MCF 10A (cell line): ENCODE measurements at regions of chr3 and their contacts with region 1.

Region 1: GRCh38 chr3:192851821-192852424 is 65.7 kb downstream of the MB21D2 start:
- DNase-seq: peak; percentile 98
- H3K4me3 Mint-ChIP-seq: peak overlapping the region; percentile 19
- H3K27ac Mint-ChIP-seq: no peak overlapping the region
- H3K4me1 Mint-ChIP-seq: peaks cover 23% of the 10 kb centered on the region
- H3K27me3 Mint-ChIP-seq: peaks cover 19% of the 10 kb centered on the region
- CTCF ChIP-seq: no peak

Region 2: GRCh38 chr3:192841428-192841827 is 10.5 kb before region 1 on chr3:
- CTCF ChIA-PET with region 1: no interaction called
- POLR2A ChIA-PET with region 1: no interaction called
- intact Hi-C with region 1: no loop called
- DNase-seq: no peak
- H3K4me3 Mint-ChIP-seq: no peak overlapping the region
- H3K27ac Mint-ChIP-seq: no peak overlapping the region
- H3K4me1 Mint-ChIP-seq: peaks cover 4% of the 10 kb centered on the region
- H3K27me3 Mint-ChIP-seq: no peaks in the 10 kb centered on the region
- CTCF ChIP-seq: no peak

Region 3: GRCh38 chr3:192879336-192880106 is 27.6 kb after region 1 on chr3:
- CTCF ChIA-PET with region 1: interaction called, 3 read pairs
- POLR2A ChIA-PET with region 1: interaction called, 8 read pairs
- intact Hi-C with region 1: loop called (anchors 2 kb)
- DNase-seq: peak; percentile 97
- H3K4me3 Mint-ChIP-seq: peak overlapping the region; percentile 51
- H3K27ac Mint-ChIP-seq: peak overlapping the region; percentile 14
- H3K4me1 Mint-ChIP-seq: peaks cover 34% of the 10 kb centered on the region
- H3K27me3 Mint-ChIP-seq: no peaks in the 10 kb centered on the region
- CTCF ChIP-seq: no peak

Region 4: DNA sequence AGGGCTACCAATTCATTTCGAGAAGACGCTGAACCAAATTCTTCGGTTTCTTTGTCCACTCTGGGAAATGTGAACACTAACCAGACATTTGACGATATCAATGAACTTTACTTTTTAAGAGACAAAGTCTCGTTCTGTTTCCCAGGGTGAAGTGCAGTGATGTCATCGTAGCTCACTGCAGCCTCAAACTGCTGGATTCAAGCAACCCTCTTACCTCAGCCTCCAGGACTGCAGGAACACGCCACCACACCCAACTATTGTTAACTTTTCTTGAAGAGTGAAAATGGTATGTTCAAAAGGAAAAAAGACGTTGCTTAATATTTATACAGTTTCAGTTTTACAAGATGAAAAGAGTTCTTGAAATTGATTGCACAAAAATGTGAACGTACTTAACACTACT is 35.1 kb after region 1 on chr3:
- CTCF ChIA-PET with region 1: interaction called, 3 read pairs
- POLR2A ChIA-PET with region 1: interaction called, 11 read pairs
- intact Hi-C with region 1: loop called (anchors 2 kb)
- DNase-seq: peak; percentile 57
- H3K4me3 Mint-ChIP-seq: peak overlapping the region; percentile 47
- H3K27ac Mint-ChIP-seq: peak overlapping the region; percentile 57
- H3K4me1 Mint-ChIP-seq: peaks cover 45% of the 10 kb centered on the region
- H3K27me3 Mint-ChIP-seq: no peaks in the 10 kb centered on the region
- CTCF ChIP-seq: no peak

Region 5: GRCh38 chr3:192892981-192893700 is 41.2 kb after region 1 on chr3:
- CTCF ChIA-PET with region 1: interaction called, 3 read pairs
- POLR2A ChIA-PET with region 1: interaction called, 11 read pairs
- intact Hi-C with region 1: loop called (anchors 2 kb)
- DNase-seq: peak; percentile 90
- H3K4me3 Mint-ChIP-seq: peak overlapping the region; percentile 5
- H3K27ac Mint-ChIP-seq: peak overlapping the region; percentile 10
- H3K4me1 Mint-ChIP-seq: peaks cover 30% of the 10 kb centered on the region
- H3K27me3 Mint-ChIP-seq: no peaks in the 10 kb centered on the region
- CTCF ChIP-seq: no peak